CD14-positive monocyte (primary cell): ENCODE measurements at regions of chr16 and their contacts with region 1.

Region 1: GRCh38 chr16:46908540-46909372 is 24.6 kb downstream of the GPT2 start:
- DNase-seq: peak; percentile 46 to 61 (median 58)
- H3K4me3 ChIP-seq: no peak overlapping the region
- H3K4me3 Mint-ChIP-seq: no peak overlapping the region
- H3K27ac ChIP-seq: no peak overlapping the region
- H3K27ac Mint-ChIP-seq: peak overlapping the region in 2 of 7 donors; percentile 37 to 50
- H3K4me1 ChIP-seq: no peaks in the 10 kb centered on the region
- H3K4me1 Mint-ChIP-seq: peaks cover 15% of the 10 kb centered on the region
- H3K27me3 ChIP-seq: no peaks in the 10 kb centered on the region
- H3K27me3 Mint-ChIP-seq: no peaks in the 10 kb centered on the region
- CTCF ChIP-seq: peak; percentile 91

Region 2: DNA sequence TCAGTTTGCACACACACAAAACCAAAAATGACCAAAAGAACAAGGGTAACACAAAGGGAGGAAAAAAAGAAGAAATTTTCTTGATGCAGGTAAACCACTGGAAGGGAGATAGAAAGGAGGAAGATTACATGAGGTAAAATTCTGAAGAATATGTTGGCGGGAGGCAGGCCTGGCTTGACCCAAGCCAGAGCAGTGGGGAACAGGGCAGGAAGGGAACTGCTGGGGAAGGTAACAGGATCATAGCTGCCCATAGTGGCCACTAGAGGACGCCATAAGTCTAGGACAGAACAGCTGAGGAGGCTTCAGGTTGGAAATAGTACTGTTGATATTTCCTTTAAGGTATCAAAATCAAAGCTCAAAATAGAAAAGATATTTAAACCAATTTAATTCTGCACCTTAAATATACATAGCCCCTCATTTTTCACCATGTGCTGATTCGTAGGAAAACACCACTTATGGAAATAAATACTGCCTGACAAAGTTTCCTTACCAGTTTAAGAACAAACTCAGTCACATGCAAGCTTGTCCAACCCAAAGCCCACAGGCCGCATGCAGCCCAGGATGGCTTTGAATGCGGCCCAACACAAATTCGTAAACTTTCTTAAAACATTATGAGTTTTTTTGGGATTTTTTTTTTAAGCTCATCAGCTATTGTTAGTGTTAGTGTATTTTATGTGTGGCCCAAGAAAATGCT is 235.3 kb before region 1 on chr16:
- intact Hi-C with region 1: loop called (anchors 10 kb)
- DNase-seq: peak; percentile 61 to 71 (median 69)
- H3K4me3 ChIP-seq: no peak overlapping the region
- H3K4me3 Mint-ChIP-seq: no peak overlapping the region
- H3K27ac ChIP-seq: peak overlapping the region in 1 of 2 donors; percentile 36
- H3K27ac Mint-ChIP-seq: peak overlapping the region in 3 of 7 donors; percentile 14 to 44 (median 22)
- H3K4me1 ChIP-seq: no peaks in the 10 kb centered on the region
- H3K4me1 Mint-ChIP-seq: no peaks in the 10 kb centered on the region
- H3K27me3 ChIP-seq: no peaks in the 10 kb centered on the region
- H3K27me3 Mint-ChIP-seq: no peaks in the 10 kb centered on the region
- CTCF ChIP-seq: peak; percentile 97

Region 3: GRCh38 chr16:46853713-46854443 is 54.9 kb before region 1 on chr16:
- intact Hi-C with region 1: loop called (anchors 1 to 2 kb)
- DNase-seq: peak; percentile 54 to 78 (median 66)
- H3K4me3 ChIP-seq: no peak overlapping the region
- H3K4me3 Mint-ChIP-seq: no peak overlapping the region
- H3K27ac ChIP-seq: no peak overlapping the region
- H3K27ac Mint-ChIP-seq: no peak overlapping the region
- H3K4me1 ChIP-seq: no peaks in the 10 kb centered on the region
- H3K4me1 Mint-ChIP-seq: peaks cover 6% of the 10 kb centered on the region
- H3K27me3 ChIP-seq: no peaks in the 10 kb centered on the region
- H3K27me3 Mint-ChIP-seq: no peaks in the 10 kb centered on the region
- CTCF ChIP-seq: peak; percentile 83